ENCODE measurements at regions of chr17 and their contacts with region 1.

Region 1: DNA sequence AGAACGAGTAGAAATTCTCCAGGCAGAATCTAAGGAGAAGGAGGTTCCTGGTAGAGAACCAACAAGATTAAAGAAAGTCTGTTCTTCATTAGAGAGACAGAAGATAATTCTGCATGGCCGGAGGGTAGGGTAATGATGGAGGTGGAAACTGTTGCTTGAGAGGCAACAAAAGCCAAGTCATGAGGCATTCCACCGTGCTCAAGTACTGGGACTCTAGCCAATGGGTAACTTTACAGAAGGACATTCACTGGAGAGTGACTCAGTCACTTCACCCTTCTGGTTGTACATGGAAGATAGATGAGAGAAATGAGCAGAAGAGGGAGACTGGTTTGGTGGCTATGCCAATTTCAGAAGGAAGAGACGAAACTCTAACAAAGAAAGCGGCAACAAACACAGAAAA is 53.6 kb upstream of the ANKFN1 start:
- DNase-seq: no peak
- H3K4me3 ChIP-seq: no peak overlapping the region
- H3K27ac ChIP-seq: no peak overlapping the region
- H3K4me1 ChIP-seq: no peaks in the 10 kb centered on the region
- H3K27me3 ChIP-seq: no peaks in the 10 kb centered on the region
- CTCF ChIP-seq: no peak
- POLR2A ChIP-seq: no peak

Region 2: GRCh38 chr17:56142325-56142724 is 42.7 kb after region 1 on chr17:
- CTCF ChIA-PET with region 1: no interaction called
- POLR2A ChIA-PET with region 1: no interaction called
- dilution Hi-C with region 1: no loop called
- intact Hi-C with region 1: loop called (anchors 5 kb)
- DNase-seq: no peak
- H3K4me3 ChIP-seq: no peak overlapping the region
- H3K27ac ChIP-seq: no peak overlapping the region
- H3K4me1 ChIP-seq: no peaks in the 10 kb centered on the region
- H3K27me3 ChIP-seq: no peaks in the 10 kb centered on the region
- CTCF ChIP-seq: no peak
- POLR2A ChIP-seq: no peak

Measured in endothelial cell of umbilical vein (primary cell).